Activated CD8-positive, alpha-beta T cell treated with anti-CD3 and anti-CD28 coated beads for 36 hours (primary cell): ENCODE measurements at regions of chr20 and their contacts with region 1.

Region 1: GRCh38 chr20:32779500-32780211 is 17.5 kb downstream of the DNMT3B start:
- DNase-seq: no peak
- ATAC-seq: no peak
- H3K4me3 Mint-ChIP-seq: no peak overlapping the region
- H3K27ac Mint-ChIP-seq: no peak overlapping the region
- H3K4me1 Mint-ChIP-seq: peaks cover 24% of the 10 kb centered on the region
- H3K27me3 Mint-ChIP-seq: no peaks in the 10 kb centered on the region
- CTCF ChIP-seq: no peak

Region 2: GRCh38 chr20:32521780-32522525 is 257.7 kb before region 1 on chr20:
- CTCF ChIA-PET with region 1: interaction called, 11 read pairs
- POLR2A ChIA-PET with region 1: no interaction called
- intact Hi-C with region 1: no loop called
- DNase-seq: peak; percentile 72
- ATAC-seq: peak; percentile 67
- H3K4me3 Mint-ChIP-seq: no peak overlapping the region
- H3K27ac Mint-ChIP-seq: peak overlapping the region; percentile 83
- H3K4me1 Mint-ChIP-seq: peaks cover 57% of the 10 kb centered on the region
- H3K27me3 Mint-ChIP-seq: no peaks in the 10 kb centered on the region
- CTCF ChIP-seq: peak; percentile 94

Region 3: GRCh38 chr20:32674362-32674789 is 105.3 kb before region 1 on chr20:
- CTCF ChIA-PET with region 1: interaction called, 356 read pairs
- POLR2A ChIA-PET with region 1: interaction called, 16 read pairs
- intact Hi-C with region 1: loop called (anchors 1 kb)
- DNase-seq: peak; percentile 87
- ATAC-seq: peak; percentile 37
- H3K4me3 Mint-ChIP-seq: no peak overlapping the region
- H3K27ac Mint-ChIP-seq: peak overlapping the region; percentile 36
- H3K4me1 Mint-ChIP-seq: peaks cover 24% of the 10 kb centered on the region
- H3K27me3 Mint-ChIP-seq: no peaks in the 10 kb centered on the region
- CTCF ChIP-seq: peak; percentile 89

Region 4: DNA sequence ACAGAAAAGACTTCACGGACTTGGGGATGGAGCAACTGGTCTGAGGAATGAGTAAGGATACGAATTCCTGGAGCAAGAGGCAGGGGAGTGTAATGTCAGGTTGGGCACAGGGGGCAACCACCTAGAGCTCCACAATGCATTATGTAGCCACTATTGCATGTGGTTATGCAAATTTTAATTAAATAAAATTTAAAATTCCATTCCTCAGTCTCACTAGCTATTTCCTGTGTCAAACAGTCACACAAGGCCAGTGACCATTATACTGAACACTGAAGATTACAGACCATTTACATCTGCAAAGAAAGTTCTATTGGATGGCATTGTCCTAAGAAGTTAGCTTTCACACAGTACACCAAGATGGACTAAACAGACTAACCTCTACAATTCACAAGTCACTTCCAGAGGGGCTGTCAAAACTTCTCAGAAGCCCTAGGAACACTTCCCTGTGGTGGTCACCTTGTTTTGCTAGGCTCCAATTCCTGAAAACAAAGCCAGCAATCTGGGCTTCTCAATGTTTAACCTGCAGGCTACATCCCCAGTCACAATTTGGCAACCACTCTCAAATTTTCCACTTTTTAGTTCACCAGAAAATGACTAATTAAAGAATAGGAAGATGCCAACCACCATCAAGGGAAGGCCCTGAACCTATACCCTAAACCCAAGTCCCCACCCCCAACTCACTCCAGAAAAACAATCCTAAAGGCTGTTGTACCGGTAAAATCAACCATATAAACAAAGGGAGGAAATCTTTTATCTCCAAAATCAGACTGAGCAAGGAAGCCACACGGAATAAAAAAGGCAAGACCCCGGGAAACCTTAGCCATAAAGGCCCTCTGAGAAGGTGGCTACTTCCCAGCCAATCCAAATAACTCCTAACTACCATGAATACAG is 71.7 kb before region 1 on chr20:
- CTCF ChIA-PET with region 1: interaction called, 14 read pairs
- POLR2A ChIA-PET with region 1: no interaction called
- intact Hi-C with region 1: no loop called
- DNase-seq: no peak
- ATAC-seq: no peak
- H3K4me3 Mint-ChIP-seq: no peak overlapping the region
- H3K27ac Mint-ChIP-seq: peak overlapping the region; percentile 72
- H3K4me1 Mint-ChIP-seq: peaks cover 16% of the 10 kb centered on the region
- H3K27me3 Mint-ChIP-seq: no peaks in the 10 kb centered on the region
- CTCF ChIP-seq: no peak

Region 5: GRCh38 chr20:32737371-32738223 is 42.1 kb before region 1 on chr20:
- CTCF ChIA-PET with region 1: interaction called, 25 read pairs
- POLR2A ChIA-PET with region 1: interaction called, 5 read pairs
- intact Hi-C with region 1: no loop called
- DNase-seq: peak; percentile 65
- ATAC-seq: peak; percentile 88
- H3K4me3 Mint-ChIP-seq: peak overlapping the region; percentile 27
- H3K27ac Mint-ChIP-seq: peak overlapping the region; percentile 89
- H3K4me1 Mint-ChIP-seq: peaks cover 38% of the 10 kb centered on the region
- H3K27me3 Mint-ChIP-seq: no peaks in the 10 kb centered on the region
- CTCF ChIP-seq: no peak

Region 6: DNA sequence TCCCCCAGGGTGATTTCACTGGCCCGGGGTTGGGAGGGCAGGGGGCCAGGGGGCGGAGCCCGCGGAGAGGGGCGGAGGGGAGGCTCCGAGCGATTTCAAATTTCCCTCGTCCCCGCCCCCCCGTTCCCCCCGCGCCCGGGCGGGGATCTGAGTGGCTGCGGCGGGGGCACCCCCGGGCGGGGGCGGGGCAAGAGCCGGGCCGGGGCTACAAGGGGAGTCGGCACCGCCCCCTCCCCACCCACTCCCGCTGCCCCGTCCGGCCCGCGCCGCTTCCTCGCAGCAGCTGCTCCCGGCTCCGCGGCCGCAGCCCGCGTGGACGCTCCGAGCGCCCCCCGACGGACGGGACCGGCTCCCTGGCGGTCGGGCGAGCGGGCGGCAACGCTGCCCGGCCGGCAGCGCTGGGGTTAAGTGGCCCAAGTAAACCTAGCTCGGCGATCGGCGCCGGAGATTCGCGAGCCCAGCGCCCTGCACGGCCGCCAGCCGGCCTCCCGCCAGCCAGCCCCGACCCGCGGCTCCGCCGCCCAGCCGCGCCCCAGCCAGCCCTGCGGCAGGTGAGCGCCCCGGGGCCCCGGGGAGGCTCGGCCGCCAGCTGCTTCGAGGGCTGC is 17.4 kb before region 1 on chr20 and contains the start of gene DNMT3B:
- CTCF ChIA-PET with region 1: interaction called, 38 read pairs
- POLR2A ChIA-PET with region 1: interaction called, 3 read pairs
- intact Hi-C with region 1: no loop called
- DNase-seq: peak; percentile 84
- ATAC-seq: peak; percentile 80
- H3K4me3 Mint-ChIP-seq: peak within 1 kb of the TSS; percentile 75
- H3K27ac Mint-ChIP-seq: peak within 1 kb of the TSS; percentile 70
- H3K4me1 Mint-ChIP-seq: peaks cover 8% of the 10 kb centered on the region
- H3K27me3 Mint-ChIP-seq: peaks cover 3% of the 10 kb centered on the region
- CTCF ChIP-seq: peak; percentile 27
- total RNA-seq, gene DNMT3B: 2.9 TPM

Region 7: GRCh38 chr20:32789896-32790750 is 10.5 kb after region 1 on chr20:
- CTCF ChIA-PET with region 1: interaction called, 49 read pairs
- POLR2A ChIA-PET with region 1: interaction called, 3 read pairs
- intact Hi-C with region 1: no loop called
- DNase-seq: peak; percentile 82
- ATAC-seq: peak; percentile 82
- H3K4me3 Mint-ChIP-seq: no peak overlapping the region
- H3K27ac Mint-ChIP-seq: no peak overlapping the region
- H3K4me1 Mint-ChIP-seq: peaks cover 32% of the 10 kb centered on the region
- H3K27me3 Mint-ChIP-seq: no peaks in the 10 kb centered on the region
- CTCF ChIP-seq: peak; percentile 99